PC-9 (cell line): ENCODE measurements at regions of chr7 and their contacts with region 1.

Region 1: GRCh38 chr7:131007394-131008330 is 273.7 kb upstream of the KLF14 start:
- DNase-seq: peak; percentile 70 to 97
- H3K4me3 ChIP-seq: no peak overlapping the region
- H3K27ac ChIP-seq: peak overlapping the region; percentile 64
- H3K4me1 ChIP-seq: peaks cover 67% of the 10 kb centered on the region
- H3K27me3 ChIP-seq: no peaks in the 10 kb centered on the region
- CTCF ChIP-seq: peak; percentile 71; the same call in 1 of the 2 replicates

Region 2: DNA sequence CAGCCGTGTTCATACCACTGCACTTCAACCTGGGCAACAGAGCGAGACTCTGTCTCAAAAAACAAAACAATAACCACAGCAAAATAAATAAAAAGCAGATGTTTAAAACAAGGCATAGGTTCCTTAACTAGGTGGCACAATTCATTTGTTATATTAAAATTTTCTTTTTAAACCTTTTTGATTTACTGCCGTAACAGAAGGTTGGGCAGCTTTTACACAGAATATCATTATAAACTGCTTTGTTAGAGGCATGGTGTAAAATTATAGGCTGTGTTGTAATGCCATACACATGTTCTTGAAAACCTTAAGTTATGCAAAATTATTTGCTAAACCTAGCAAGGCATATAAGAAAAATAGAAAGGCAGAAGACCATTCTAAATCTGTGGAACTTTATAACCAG is 404.4 kb after region 1 on chr7:
- CTCF ChIA-PET with region 1: no interaction called
- POLR2A ChIA-PET with region 1: interaction called, 10 read pairs
- intact Hi-C with region 1: no loop called
- DNase-seq: no peak
- H3K4me3 ChIP-seq: no peak overlapping the region
- H3K27ac ChIP-seq: no peak overlapping the region
- H3K4me1 ChIP-seq: no peaks in the 10 kb centered on the region
- H3K27me3 ChIP-seq: no peaks in the 10 kb centered on the region
- CTCF ChIP-seq: no peak